K562 (cell line): ENCODE measurements at regions of chr3 and their contacts with region 1.

Region 1: DNA sequence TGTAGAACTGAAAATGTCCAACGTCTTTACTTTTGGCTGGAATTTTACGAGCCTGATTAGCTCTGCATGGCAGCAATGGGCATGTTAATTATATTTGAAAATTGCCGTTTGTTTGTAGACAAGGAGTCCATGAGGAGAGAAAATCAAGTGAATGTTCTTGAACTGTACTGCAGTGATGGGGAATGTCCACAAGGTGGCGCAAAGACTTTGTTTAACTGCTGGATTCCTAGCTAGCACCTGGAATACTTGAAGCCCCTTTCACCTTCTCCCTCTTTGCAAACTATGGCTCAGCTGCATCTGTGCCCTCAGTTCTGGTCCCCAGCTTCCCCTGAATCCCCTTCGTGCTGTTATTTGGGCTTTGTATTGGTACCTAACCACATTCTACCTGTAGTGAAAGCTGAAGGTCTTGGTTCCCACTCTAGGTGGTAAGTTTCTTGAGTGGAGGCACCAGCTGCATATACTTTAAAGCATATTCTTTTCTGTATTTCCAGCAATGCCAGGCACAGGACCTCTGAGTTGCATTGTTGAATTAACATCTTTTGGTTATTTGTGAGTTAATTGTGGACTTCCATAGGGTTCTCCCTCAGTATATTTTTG is 25.3 kb downstream of the EXOG start:
- DNase-seq: peak; percentile 65 to 86 (median 67)
- ATAC-seq: peak; percentile 87
- H3K4me3 ChIP-seq: no peak overlapping the region
- H3K27ac ChIP-seq: no peak overlapping the region
- H3K4me1 ChIP-seq: no peaks in the 10 kb centered on the region
- H3K27me3 ChIP-seq: no peaks in the 10 kb centered on the region
- CTCF ChIP-seq: peak; percentile 83 to 94 (median 91)
- EP300 ChIP-seq: no peak
- POLR2A ChIP-seq: no peak
- RAD21 ChIP-seq: peak; percentile 75 to 85

Region 2: DNA sequence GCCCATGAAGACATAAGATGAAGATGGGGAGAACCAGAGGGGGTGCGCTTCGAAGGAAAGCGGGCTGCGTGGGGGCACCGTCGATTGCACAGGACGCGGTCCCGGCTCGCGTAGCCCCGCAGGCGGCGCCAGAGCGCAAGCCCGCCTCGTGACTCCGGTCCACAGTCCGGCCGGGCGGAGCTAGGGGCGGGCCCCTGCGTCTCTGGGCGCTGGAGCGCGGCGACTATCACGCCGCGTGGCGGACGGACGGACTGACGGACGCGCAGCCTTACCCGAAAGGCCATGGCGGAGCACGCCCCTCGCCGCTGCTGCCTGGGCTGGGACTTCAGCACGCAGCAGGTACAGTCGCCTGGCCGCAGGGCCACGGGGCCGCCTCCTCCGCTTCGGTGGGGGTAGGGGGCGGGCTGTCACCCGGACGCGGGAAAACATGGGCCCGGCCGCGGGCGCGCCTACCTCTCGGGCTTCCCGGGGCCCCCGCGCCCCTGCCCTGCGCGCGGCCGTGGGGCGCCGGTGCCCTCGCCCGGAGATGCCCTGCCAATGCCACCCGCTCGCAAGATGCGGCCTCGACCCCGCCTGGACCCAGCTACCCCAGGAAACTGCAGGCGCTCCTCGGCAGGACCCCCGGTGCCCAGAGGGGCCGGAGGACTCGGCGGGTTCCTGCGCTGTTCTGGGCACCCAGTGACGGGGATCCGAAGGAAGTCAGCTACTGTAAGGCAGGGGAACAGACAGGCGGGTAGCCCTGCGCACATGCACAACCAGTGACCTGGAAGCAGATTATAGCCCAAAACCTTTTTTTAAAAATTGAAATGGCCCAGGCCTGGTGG is 174.7 kb before region 1 on chr3 and contains the start of gene XYLB:
- CTCF ChIA-PET with region 1: no interaction called
- POLR2A ChIA-PET with region 1: no interaction called
- in situ Hi-C with region 1: no loop called
- intact Hi-C with region 1: no loop called
- DNase-seq: peak; percentile 96 to 97 (median 96)
- ATAC-seq: peak; percentile 96
- H3K4me3 ChIP-seq: peak within 1 kb of the TSS; percentile 98
- H3K27ac ChIP-seq: peak within 1 kb of the TSS; percentile 89
- H3K4me1 ChIP-seq: peaks cover 18 to 27% of the 10 kb centered on the region in 2 experiments; a peak in 4 of 5 replicates
- H3K27me3 ChIP-seq: no peaks in the 10 kb centered on the region
- CTCF ChIP-seq: peak; percentile 91 to 94 (median 93)
- EP300 ChIP-seq: no peak
- POLR2A ChIP-seq: peak; percentile 83
- RAD21 ChIP-seq: peak; percentile 77 to 82
- polyA plus RNA-seq, gene XYLB: 4.0 to 6.1 TPM

Region 3: DNA sequence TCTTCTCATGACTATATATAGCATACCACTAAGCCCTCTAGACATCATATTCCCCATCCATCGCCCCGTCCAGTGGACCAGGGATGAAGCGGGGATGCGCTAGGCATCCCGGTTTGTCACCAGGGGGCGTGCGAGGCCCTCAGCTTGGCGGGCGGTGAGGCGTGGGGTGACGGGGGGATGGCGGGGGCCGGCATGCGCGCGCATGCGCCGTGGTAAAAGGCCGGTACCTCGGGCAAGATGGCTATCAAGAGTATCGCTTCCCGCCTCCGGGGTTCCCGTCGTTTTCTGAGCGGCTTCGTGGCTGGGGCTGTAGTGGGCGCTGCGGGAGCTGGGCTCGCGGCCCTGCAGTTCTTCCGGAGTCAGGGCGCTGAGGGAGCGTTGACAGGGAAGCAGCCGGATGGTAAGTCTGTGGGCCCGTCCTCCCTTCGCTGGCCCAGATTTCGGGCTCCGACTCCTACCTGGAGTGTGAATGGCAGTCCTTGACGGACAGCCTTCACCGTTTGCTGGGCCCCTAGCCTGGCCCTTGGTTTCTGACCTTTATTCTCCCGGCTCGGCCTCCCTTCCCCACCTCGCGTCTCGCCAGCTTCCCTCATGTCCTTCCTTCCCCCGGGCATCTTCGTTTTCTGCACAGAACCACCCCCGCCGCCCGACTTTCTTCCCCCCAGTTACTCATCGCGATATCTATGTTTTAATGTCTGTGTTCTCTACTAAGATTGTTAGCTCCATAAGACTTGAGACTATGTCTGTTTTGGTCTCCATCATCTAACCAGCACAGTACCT is 25.2 kb before region 1 on chr3 and contains the start of gene EXOG:
- CTCF ChIA-PET with region 1: interaction called, 4 read pairs
- POLR2A ChIA-PET with region 1: interaction called, 4 read pairs
- in situ Hi-C with region 1: no loop called
- intact Hi-C with region 1: loop called (anchors 1 kb)
- DNase-seq: peak; percentile 97 to 100 (median 100)
- ATAC-seq: peak; percentile 99
- H3K4me3 ChIP-seq: peak within 1 kb of the TSS; percentile 63
- H3K27ac ChIP-seq: peak within 1 kb of the TSS; percentile 69
- H3K4me1 ChIP-seq: peaks cover 4 to 5% of the 10 kb centered on the region in 2 experiments; a peak in 4 of 5 replicates
- H3K27me3 ChIP-seq: no peaks in the 10 kb centered on the region
- CTCF ChIP-seq: peak; percentile 87 to 96 (median 90)
- EP300 ChIP-seq: peak; percentile 12; the same call in 1 of the 2 replicates
- POLR2A ChIP-seq: peak; percentile 86
- RAD21 ChIP-seq: peak; percentile 82 to 83
- polyA plus RNA-seq, gene EXOG: 13.1 to 21.7 TPM

Region 4: DNA sequence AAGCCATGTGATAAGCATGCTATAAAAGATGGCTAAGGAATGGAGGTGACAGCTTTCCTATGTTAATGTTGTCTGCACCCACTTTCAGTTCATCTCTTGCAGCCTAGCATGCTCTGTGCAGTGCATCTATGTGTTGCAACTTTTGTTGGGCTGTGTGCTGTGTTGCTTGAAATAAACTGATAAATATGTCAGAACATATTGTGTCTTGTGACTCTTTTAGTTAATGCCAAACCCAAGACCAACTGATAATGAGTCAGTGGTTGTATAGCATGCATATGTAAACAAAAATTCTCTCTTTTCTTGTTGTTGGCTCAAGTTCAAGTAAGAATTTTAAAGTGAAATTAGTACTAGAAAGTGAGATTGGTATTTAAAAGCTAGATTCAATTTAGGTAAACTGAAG is 331.5 kb after region 1 on chr3:
- CTCF ChIA-PET with region 1: no interaction called
- POLR2A ChIA-PET with region 1: no interaction called
- in situ Hi-C with region 1: no loop called
- intact Hi-C with region 1: no loop called
- DNase-seq: no peak
- ATAC-seq: no peak
- H3K4me3 ChIP-seq: no peak overlapping the region
- H3K27ac ChIP-seq: no peak overlapping the region
- H3K4me1 ChIP-seq: no peaks in the 10 kb centered on the region
- H3K27me3 ChIP-seq: no peaks in the 10 kb centered on the region; a peak in 1 of 5 replicates
- CTCF ChIP-seq: no peak
- EP300 ChIP-seq: no peak
- POLR2A ChIP-seq: no peak
- RAD21 ChIP-seq: no peak